Natural killer cell (primary cell): ENCODE measurements at regions of chr12 and their contacts with region 1.

Region 1: DNA sequence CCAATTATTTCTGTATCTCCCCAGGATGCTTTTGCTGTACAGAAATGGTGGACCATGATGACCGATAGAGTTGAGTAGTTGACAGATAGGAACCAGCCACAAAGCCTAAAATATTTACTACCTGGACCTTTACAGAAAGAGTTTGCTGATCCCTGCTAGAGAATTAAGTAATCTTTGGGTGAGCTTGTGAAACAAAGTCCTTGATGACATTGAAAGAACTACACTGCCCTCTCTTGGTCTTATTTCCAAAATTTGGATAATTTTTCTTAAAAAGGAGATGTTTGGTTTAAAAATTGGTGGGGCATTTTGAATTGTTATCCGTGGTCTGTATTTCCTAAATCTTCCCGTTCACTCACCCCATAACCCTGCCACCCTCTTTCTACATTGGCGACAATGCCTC is 13.7 kb upstream of the TCTN1 start:
- DNase-seq: peak in 1 of 2 donors; percentile 74
- ATAC-seq: peak in 2 of 3 donors; percentile 44 to 45
- H3K4me3 ChIP-seq: no peak overlapping the region
- H3K4me3 Mint-ChIP-seq: no peak overlapping the region
- H3K27ac ChIP-seq: no peak overlapping the region
- H3K27ac Mint-ChIP-seq: peak overlapping the region in 1 of 2 donors; percentile 51
- H3K4me1 ChIP-seq: peaks cover 11% of the 10 kb centered on the region
- H3K4me1 Mint-ChIP-seq: peaks cover 5 to 6% of the 10 kb centered on the region in 2 donors
- H3K27me3 ChIP-seq: no peaks in the 10 kb centered on the region
- H3K27me3 Mint-ChIP-seq: no peaks in the 10 kb centered on the region
- CTCF ChIP-seq: peak; percentile 55

Region 2: DNA sequence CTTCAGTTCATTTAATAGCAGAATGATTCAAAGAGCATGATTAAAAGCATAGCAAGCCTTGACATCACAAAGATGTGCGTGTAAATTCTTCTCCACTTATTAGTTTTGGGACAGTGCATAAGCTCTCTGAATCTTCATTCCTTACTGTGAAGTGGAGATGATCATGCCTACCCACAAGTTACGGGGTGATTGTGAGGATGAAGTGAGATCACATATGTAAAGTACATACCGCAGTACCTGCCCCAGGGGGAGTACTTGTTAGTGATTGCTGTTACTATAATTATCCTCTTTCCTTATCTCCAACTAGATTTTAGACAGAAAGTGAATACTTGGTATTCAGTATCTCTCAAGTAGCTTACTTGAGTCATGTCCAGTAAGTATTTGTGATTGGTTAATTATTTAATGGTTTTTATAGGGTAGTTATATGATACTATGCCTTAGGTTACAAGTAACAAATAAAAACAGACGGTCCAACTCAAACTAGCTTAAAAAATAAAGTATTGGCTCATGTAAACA is 92.1 kb before region 1 on chr12:
- intact Hi-C with region 1: loop called (anchors 1 kb)
- DNase-seq: no peak
- ATAC-seq: no peak
- H3K4me3 ChIP-seq: no peak overlapping the region
- H3K4me3 Mint-ChIP-seq: no peak overlapping the region
- H3K27ac ChIP-seq: no peak overlapping the region
- H3K27ac Mint-ChIP-seq: no peak overlapping the region
- H3K4me1 ChIP-seq: no peaks in the 10 kb centered on the region
- H3K4me1 Mint-ChIP-seq: no peaks in the 10 kb centered on the region
- H3K27me3 ChIP-seq: no peaks in the 10 kb centered on the region
- H3K27me3 Mint-ChIP-seq: no peaks in the 10 kb centered on the region
- CTCF ChIP-seq: no peak

Region 3: GRCh38 chr12:110555577-110556406 is 44.5 kb before region 1 on chr12:
- intact Hi-C with region 1: loop called (anchors 1 kb)
- DNase-seq: no peak
- ATAC-seq: no peak
- H3K4me3 ChIP-seq: no peak overlapping the region
- H3K4me3 Mint-ChIP-seq: no peak overlapping the region
- H3K27ac ChIP-seq: no peak overlapping the region
- H3K27ac Mint-ChIP-seq: peak overlapping the region; percentile 52 to 82
- H3K4me1 ChIP-seq: peaks cover 8% of the 10 kb centered on the region
- H3K4me1 Mint-ChIP-seq: peaks cover 46 to 62% of the 10 kb centered on the region in 2 donors
- H3K27me3 ChIP-seq: no peaks in the 10 kb centered on the region
- H3K27me3 Mint-ChIP-seq: no peaks in the 10 kb centered on the region
- CTCF ChIP-seq: no peak